ENCODE measurements at regions of chr1 and their contacts with region 1.

Region 1: DNA sequence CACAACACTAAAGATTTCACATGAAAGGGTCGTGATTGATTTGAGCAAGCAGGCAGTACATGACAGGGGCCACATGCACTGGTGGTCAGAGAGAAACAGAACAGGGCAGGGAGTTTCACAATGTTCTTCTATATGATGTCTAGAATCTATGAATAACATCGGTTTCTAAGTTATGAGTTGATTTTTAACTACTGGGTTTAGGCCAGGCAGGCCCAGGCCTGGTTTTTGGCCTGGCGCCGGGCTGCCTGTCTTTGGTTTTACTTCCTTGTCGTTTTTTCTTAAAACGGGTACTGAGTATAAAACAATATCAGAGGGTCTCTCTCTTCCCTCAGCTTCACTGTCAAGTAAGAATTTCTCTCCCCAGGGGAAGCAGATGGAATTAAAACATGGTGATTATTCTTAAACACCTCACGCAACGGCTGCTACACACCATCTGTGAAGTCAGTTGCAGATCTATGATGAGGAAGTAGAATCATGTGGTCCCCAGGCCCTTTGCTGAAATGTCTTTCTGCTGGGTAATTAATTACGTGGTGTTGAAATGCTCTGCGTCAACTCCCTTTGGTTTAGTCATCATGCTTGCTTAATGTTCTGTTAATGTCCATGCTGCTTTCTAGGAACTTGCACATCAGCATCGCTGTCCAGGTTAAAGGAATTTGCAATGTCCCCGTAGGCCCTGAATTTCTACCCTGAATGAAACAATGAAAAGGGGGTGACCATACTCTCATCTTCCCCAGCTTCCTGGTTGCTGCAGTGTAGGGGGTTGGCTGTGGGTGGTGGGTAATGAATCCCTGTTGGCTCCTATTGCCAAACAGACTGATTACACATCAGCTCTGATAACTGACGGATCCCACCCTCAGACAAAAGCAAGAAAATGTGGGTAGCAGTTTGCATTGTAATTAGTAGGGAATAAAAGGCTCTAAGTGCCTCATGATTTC is 70.3 kb downstream of the SERINC2 start:
- DNase-seq: peak; percentile 95
- H3K4me3 ChIP-seq: no peak overlapping the region
- H3K27ac ChIP-seq: peak overlapping the region; percentile 88
- H3K4me1 ChIP-seq: peaks cover 25% of the 10 kb centered on the region
- H3K27me3 ChIP-seq: no peaks in the 10 kb centered on the region
- CTCF ChIP-seq: no peak

Region 2: GRCh38 chr1:31531177-31531999 is 48.1 kb after region 1 on chr1:
- CTCF ChIA-PET with region 1: no interaction called
- dilution Hi-C with region 1: no loop called
- in situ Hi-C with region 1: no loop called
- intact Hi-C with region 1: loop called (anchors 10 kb)
- DNase-seq: peak; percentile 76
- H3K4me3 ChIP-seq: no peak overlapping the region
- H3K27ac ChIP-seq: no peak overlapping the region
- H3K4me1 ChIP-seq: peaks cover 17% of the 10 kb centered on the region
- H3K27me3 ChIP-seq: no peaks in the 10 kb centered on the region
- CTCF ChIP-seq: no peak